Common myeloid progenitor, CD34-positive (primary cell): ENCODE measurements at regions of chr4 and their contacts with region 1.

Region 1: DNA sequence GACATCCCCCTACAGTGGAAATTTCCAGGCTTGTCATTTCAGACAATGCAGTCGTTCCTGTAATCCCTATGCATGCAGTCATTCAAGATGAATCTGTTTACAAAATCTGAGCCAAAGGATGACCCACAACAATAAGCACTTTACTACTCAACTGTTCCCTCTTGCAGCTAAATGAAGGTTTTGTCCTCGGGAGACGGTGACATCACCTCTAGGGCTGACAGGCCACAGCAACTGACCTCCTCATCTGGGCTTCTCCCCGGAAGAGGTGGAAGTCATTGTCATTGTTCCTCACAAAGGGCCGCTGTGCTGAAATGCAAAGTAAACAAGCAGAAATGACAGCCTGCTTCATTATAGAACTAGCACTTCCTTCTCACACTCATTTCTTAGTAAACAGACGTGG is 29.2 kb downstream of the CLRN2 start:
- DNase-seq: no peak
- H3K4me3 ChIP-seq: no peak overlapping the region
- H3K27ac ChIP-seq: no peak overlapping the region
- H3K4me1 ChIP-seq: no peaks in the 10 kb centered on the region
- H3K27me3 ChIP-seq: no peaks in the 10 kb centered on the region

Region 2: DNA sequence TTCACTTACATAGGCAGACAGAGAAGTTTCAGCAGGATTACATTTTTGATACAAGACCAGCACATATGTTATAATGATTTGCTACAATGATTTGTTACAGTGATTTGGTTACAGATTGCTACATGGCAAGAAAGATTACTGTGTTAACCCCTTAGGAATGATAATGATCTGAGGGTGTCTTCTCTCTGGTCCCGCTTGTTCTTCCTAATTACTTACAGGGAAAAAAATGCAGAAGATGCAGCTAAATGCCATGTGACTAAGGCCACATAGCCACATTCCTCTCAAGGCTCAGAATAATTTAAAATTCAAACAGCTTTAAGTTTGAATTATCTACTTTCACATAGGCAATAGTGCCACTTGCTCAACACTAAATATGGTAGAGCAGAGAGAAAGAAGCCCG is 23.1 kb after region 1 on chr4:
- CTCF ChIA-PET with region 1: interaction called, 12 read pairs
- POLR2A ChIA-PET with region 1: no interaction called
- DNase-seq: no peak
- H3K4me3 ChIP-seq: no peak overlapping the region
- H3K27ac ChIP-seq: no peak overlapping the region
- H3K4me1 ChIP-seq: no peaks in the 10 kb centered on the region
- H3K27me3 ChIP-seq: peaks cover 0 to 2% (median 0%) of the 10 kb centered on the region in 5 experiments

Region 3: DNA sequence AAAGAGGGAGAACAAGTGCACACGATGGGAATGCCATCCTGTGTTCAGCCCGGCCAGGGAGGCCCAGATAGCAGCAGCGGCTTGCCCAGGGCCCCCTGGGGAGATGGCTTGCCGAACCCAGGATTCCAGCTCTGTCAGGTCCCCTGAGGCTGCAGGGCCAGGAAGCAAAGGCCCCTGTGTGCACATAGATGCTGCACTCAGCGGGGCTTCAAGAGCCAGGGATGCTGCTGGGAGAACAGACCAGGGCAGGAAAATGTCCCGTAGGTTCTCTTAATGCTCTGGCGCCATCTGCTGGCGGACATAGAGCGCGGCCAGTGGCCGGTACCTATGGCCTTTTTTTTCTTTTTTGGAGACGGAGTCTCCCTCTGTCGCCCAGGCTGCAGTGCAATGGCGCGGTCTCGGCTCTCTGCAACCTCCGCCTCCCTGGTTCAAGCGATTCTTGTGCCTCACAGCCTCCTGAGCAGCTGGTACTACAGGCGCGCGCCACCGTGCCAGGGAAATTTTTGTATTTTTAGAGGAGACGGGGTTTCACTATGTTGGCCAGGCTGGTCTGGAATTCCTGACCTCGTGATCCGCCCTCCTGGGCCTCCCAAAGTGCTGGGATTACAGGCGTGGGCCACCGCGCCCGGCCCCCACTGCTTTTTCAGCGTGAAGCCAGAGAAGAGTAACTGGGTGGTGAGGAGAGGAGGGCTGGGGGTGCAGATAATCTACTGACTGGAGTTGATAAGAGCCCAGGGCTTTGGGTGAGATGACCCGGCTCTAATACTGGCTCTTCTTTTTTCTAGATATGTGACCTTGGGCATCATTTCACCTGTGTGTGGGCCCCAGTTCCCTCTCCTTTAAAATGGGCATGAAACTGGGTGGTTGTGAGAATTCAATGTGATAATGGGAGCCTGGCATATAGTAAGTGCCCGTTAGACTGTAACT is 92.8 kb after region 1 on chr4:
- CTCF ChIA-PET with region 1: interaction called, 37 read pairs
- POLR2A ChIA-PET with region 1: interaction called, 4 read pairs
- DNase-seq: peak; percentile 63 to 79 (median 71)
- H3K4me3 ChIP-seq: no peak overlapping the region
- H3K27ac ChIP-seq: no peak overlapping the region
- H3K4me1 ChIP-seq: no peaks in the 10 kb centered on the region
- H3K27me3 ChIP-seq: no peaks in the 10 kb centered on the region